Body of pancreas (tissue), 4 donors: ENCODE measurements at regions of chr5 and their contacts with region 1.

Region 1: DNA sequence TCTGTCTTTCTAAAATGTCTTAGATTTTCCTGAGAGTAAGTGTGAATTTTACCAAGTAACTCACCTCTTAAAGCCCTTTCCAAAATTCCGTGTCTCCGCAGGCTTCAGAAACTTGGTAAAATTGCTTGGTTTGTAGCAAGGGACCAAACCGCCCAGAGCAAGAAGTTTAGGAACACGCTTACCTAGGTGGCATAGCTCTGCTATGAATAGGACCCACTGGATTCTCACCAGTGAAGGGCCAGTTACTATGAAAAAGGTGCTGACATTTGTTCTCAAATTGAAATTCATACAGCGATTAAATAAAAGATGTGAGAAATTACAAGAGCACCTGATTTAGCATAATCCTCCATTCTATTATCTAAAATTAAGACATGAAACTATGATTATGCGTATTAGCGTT is 6.7 kb downstream of the NME5 start:
- DNase-seq: no peak
- ATAC-seq: no peak
- H3K4me3 ChIP-seq: no peak overlapping the region
- H3K27ac ChIP-seq: no peak overlapping the region
- H3K4me1 ChIP-seq: no peaks in the 10 kb centered on the region
- H3K27me3 ChIP-seq: no peaks in the 10 kb centered on the region
- CTCF ChIP-seq: no peak
- POLR2A ChIP-seq: no peak

Region 2: GRCh38 chr5:137778772-137779564 is 353.6 kb before region 1 on chr5:
- intact Hi-C with region 1: loop called (anchors 5 kb)
- DNase-seq: no peak
- ATAC-seq: no peak
- H3K4me3 ChIP-seq: no peak overlapping the region
- H3K27ac ChIP-seq: no peak overlapping the region
- H3K4me1 ChIP-seq: no peaks in the 10 kb centered on the region
- H3K27me3 ChIP-seq: no peaks in the 10 kb centered on the region
- CTCF ChIP-seq: peak; percentile 45 to 78 (median 72)
- POLR2A ChIP-seq: no peak